Ascending aorta (tissue), 2 donors: ENCODE measurements at regions of chr17 and their contacts with region 1.

Region 1: GRCh38 chr17:58352014-58352842 is at the start of gene SUPT4H1:
- DNase-seq: peak; percentile 64 to 91
- H3K4me3 ChIP-seq: peak within 1 kb of the TSS; percentile 74 to 81
- H3K27ac ChIP-seq: peak within 1 kb of the TSS; percentile 84 to 93
- H3K4me1 ChIP-seq: peaks cover 2 to 3% of the 10 kb centered on the region in 2 donors
- H3K27me3 ChIP-seq: no peaks in the 10 kb centered on the region
- CTCF ChIP-seq: no peak
- total RNA-seq, gene SUPT4H1: 18.0 TPM

Region 2: DNA sequence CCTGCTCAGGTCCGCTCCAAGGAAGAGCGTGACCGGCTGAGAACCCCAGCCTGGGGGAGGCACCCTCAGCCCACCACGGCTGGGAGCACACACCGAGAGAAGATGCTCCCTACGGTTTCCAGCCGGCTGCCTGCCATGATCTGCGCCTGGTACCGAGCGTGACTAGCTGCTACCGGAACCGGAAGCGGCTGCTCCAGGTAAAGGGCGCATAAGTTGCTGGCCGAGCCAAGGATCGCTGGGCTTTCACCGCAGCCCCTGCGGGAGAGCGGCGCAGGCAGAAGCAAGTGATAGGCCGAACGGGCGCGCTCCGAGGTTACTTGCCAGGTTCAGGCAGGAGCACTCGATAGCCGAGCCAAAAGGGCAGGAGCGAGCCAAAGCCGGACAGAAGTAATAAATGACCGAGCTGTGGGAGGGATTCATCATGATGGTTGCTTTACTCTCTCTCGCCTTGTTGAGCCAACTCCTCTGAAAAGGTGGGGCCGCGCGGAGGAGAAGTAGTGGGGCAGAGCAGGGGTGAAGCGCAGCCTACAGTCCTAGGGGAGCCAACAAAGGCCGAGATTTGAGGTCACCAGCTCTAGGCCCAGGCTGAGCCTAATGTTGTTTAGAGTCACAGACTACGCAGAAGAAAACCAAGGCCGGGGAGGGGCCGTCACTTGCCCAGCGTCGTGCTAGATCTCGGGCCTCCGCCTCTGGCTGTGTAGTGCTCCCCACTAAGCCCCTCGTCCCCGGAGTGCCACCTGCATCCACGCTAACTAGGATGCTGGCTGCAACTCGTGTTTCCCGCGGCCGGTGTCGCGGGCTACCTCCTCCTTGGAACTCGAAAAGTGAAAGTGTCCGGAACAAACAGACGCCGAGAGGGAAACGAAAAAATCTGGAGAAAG is 502.1 kb before region 1 on chr17 and contains the start of gene MRPS23:
- intact Hi-C with region 1: loop called (anchors 5 kb)
- DNase-seq: peak; percentile 88 to 99
- H3K4me3 ChIP-seq: peak within 1 kb of the TSS; percentile 67 to 97
- H3K27ac ChIP-seq: peak within 1 kb of the TSS; percentile 88 to 96
- H3K4me1 ChIP-seq: peaks cover 15 to 41% of the 10 kb centered on the region in 2 donors
- H3K27me3 ChIP-seq: no peaks in the 10 kb centered on the region
- CTCF ChIP-seq: no peak
- total RNA-seq, gene MRPS23: 2.0 TPM

Region 3: DNA sequence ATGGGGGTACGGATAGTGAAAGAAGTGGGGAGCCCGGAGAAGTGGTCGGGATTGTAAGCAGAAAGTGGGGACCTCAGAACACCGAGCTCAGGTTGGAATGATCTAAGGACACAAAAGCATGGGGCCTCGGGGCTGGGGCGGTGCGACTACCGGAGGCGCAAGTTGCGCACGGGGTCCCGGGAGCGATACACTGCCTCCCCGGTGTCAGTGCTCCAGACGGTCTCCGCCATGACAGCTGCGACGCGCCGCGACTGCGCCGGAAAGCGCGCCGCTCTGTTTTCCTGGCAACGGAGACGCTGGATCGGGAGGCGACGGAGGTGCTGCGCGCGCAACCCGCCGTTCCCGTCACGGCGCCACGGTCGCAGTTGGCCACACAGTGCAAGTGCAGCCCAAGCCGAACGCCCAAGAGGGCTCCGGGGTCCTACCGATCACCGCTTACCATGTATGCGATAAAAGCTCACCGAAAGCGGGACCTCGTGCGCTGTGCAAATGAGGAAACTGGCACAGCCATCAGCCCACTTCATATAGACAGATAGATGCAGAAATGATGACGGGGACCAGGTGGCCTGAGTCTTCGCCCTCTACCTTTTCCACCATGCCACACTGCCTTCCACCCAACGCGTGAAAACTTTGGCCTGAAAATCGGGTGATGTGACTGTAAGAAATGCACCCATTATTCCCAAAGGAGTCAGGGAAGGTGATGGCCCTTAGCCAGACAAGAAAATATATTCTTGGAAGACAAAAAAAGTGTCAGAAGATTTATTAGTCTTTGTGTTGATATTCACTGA is 133.0 kb before region 1 on chr17 and contains the start of gene MKS1:
- intact Hi-C with region 1: loop called (anchors 2 kb)
- DNase-seq: peak; percentile 70 to 97
- H3K4me3 ChIP-seq: peak within 1 kb of the TSS; percentile 58 to 65
- H3K27ac ChIP-seq: peak within 1 kb of the TSS; percentile 56 to 67
- H3K4me1 ChIP-seq: no peaks in the 10 kb centered on the region
- H3K27me3 ChIP-seq: no peaks in the 10 kb centered on the region
- CTCF ChIP-seq: peak; percentile 56 to 79 (median 75)
- total RNA-seq, gene MKS1: 1.5 TPM

Region 4: DNA sequence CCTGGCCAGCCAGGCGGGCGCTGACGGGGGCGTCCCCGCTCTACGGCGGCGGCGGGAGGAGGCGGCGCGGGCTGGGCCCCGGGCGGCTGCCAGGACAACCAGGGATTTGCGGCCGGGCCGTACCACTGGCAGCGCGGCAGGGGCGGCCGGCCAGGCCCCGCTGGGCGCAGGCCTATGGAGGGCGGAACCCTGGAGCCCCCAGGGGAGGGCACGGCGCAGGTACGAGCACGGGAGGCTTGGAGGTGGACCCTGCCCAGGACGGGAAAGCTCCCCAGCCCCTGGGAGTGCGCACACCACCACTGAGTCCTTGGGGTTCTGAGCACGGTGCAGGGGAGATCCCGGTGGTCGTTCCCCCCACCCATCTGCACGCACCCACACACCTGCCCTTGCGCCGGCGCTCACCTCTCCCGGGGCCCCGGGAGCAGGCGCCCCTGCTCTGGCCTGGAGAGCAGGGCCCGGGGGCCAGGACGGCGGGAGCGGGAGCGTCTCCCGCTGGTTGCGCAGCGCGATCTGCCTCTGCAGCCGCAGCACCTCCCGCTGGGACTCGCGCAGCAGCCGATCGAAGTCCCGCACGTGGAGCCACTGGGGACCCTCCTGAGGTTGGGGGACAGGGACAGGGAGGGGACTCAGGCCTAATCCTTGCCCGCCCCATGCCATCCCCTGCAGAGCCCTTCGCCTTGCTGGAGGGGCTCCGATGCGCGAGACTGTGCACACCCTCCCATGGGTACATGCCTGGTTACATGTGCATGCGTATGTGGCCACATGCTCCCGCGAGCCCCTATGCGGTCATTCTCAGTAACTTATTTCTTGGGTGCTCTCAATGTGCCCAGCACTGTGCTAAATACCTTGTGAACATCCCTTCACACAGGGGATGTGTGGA is 27.6 kb before region 1 on chr17:
- intact Hi-C with region 1: loop called (anchors 1 kb)
- DNase-seq: no peak
- H3K4me3 ChIP-seq: peak overlapping the region; percentile 72 to 90
- H3K27ac ChIP-seq: peak overlapping the region; percentile 42 to 61
- H3K4me1 ChIP-seq: peaks cover 2 to 3% of the 10 kb centered on the region in 2 donors
- H3K27me3 ChIP-seq: no peaks in the 10 kb centered on the region
- CTCF ChIP-seq: no peak

Region 5: DNA sequence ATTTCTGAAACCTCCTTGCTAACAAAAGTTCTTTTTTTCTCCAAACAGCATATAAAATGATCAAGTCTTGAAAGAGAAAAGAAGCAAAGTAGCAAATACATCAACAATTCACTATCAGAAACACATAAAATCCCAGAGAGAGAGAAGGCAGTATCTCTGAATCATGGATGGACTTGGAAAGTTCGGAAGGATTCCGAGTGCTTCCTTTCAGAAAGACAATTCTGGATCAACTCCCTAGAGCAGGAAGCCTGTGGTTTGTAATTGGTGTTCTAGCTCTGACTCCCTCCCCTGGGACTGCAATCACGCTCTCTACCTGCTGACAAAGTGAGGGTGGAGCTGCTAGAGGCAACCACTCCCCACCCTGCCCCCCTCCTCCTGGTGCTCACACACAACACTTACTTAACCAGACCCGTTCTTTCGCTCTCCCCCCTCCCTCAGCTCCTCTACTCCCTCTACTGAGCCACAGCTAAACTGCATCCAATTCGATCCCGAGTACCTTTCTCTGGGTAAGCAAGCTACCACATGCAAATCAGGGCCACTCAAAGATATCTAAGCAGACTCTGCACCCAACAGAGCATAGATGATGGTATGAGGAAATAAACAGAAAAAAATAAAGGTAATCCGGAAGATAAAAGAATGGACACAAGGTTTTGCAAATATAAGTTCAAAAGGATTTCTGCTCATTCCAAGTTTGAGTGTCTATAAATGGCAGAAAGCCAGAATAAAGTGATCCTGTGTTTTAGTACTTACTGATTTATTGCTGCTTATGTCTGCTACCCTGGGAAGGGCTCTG is 65.3 kb after region 1 on chr17 and contains the start of gene RNF43:
- intact Hi-C with region 1: loop called (anchors 2 kb)
- DNase-seq: peak; percentile 77 to 92
- H3K4me3 ChIP-seq: peak within 1 kb of the TSS; percentile 34 to 53
- H3K27ac ChIP-seq: no peak within 1 kb of the TSS
- H3K4me1 ChIP-seq: no peaks in the 10 kb centered on the region
- H3K27me3 ChIP-seq: no peaks in the 10 kb centered on the region
- CTCF ChIP-seq: peak; percentile 72 to 80 (median 77)
- total RNA-seq, gene RNF43: 0.53 TPM

Region 6: GRCh38 chr17:59106463-59107305 is 754.5 kb after region 1 on chr17 and contains the start of gene TRIM37:
- intact Hi-C with region 1: loop called (anchors 10 kb)
- DNase-seq: peak; percentile 84 to 98
- H3K4me3 ChIP-seq: peak within 1 kb of the TSS; percentile 78 to 95
- H3K27ac ChIP-seq: peak within 1 kb of the TSS; percentile 87 to 89
- H3K4me1 ChIP-seq: peaks cover 4 to 13% of the 10 kb centered on the region in 2 donors
- H3K27me3 ChIP-seq: no peaks in the 10 kb centered on the region
- CTCF ChIP-seq: peak in 1 of 3 experiments; percentile 6
- total RNA-seq, gene TRIM37: 15.0 TPM